ENCODE measurements at regions of chr10 and their contacts with region 1.

Region 1: GRCh38 chr10:110746254-110746826 is 102.2 kb downstream of the RBM20 start:
- DNase-seq: peak in 13 of 14 experiments; percentile 12 to 77 (median 45)
- ATAC-seq: peak; percentile 19
- H3K4me3 ChIP-seq: no peak overlapping the region
- H3K4me3 Mint-ChIP-seq: no peak overlapping the region
- H3K27ac ChIP-seq: no peak overlapping the region
- H3K27ac Mint-ChIP-seq: peak overlapping the region; percentile 68
- H3K4me1 ChIP-seq: peaks cover 39% of the 10 kb centered on the region
- H3K4me1 Mint-ChIP-seq: peaks cover 89% of the 10 kb centered on the region
- H3K27me3 ChIP-seq: no peaks in the 10 kb centered on the region
- H3K27me3 Mint-ChIP-seq: no peaks in the 10 kb centered on the region
- CTCF ChIP-seq: peak; percentile 91

Region 2: DNA sequence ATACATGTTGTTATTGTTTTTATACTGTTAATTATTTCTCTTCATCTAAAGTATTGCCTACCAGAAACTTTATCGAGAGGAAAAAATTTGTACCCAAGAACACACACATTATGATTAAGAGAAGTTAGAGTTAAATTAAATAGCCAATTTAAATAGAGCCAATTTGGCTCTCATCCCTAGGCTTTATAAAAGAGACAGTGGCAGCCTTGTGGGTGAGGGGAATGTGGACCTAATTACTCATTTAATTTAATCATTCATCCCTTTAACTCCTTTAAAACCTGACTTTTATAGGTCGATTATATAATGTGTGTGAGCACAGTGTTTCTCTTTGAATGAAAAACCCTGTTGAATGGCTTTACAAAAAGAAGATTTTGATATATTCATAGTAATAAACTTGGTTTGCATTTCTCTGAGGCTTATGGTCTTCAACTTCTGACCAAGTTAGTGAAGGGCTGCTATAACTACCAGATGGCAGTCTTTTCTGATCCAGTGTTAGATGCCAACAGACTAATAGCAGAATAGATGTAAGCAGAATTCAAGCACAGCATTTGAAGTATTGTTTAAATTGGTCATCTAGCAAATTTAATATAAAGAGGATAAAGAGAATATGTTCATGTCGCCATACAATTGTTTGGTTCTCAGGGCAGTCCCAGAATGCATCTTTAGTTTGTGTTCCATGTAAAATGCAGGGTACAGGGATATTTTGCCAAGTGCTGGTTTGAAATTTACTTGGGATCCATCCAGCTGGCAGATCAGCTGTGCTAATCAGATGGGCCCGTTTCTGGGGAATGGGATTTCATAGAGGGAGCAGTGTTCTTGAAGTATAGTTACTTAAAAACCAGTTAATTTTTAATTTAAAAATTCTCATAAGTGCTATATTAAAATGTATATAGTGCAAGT is 713.3 kb before region 1 on chr10:
- CTCF ChIA-PET with region 1: no interaction called
- POLR2A ChIA-PET with region 1: no interaction called
- intact Hi-C with region 1: no loop called
- DNase-seq: no peak
- ATAC-seq: no peak
- H3K4me3 ChIP-seq: no peak overlapping the region
- H3K4me3 Mint-ChIP-seq: no peak overlapping the region
- H3K27ac ChIP-seq: no peak overlapping the region
- H3K27ac Mint-ChIP-seq: peak overlapping the region; percentile 2
- H3K4me1 ChIP-seq: peaks cover 33% of the 10 kb centered on the region
- H3K4me1 Mint-ChIP-seq: peaks cover 89% of the 10 kb centered on the region
- H3K27me3 ChIP-seq: no peaks in the 10 kb centered on the region
- H3K27me3 Mint-ChIP-seq: no peaks in the 10 kb centered on the region
- CTCF ChIP-seq: no peak

Region 3: GRCh38 chr10:110798340-110798739 is 52.0 kb after region 1 on chr10:
- CTCF ChIA-PET with region 1: interaction called, 3 read pairs
- POLR2A ChIA-PET with region 1: interaction called, 5 read pairs
- intact Hi-C with region 1: loop called (anchors 1 to 2 kb)
- DNase-seq: no peak
- ATAC-seq: no peak
- H3K4me3 ChIP-seq: no peak overlapping the region
- H3K4me3 Mint-ChIP-seq: no peak overlapping the region
- H3K27ac ChIP-seq: no peak overlapping the region
- H3K27ac Mint-ChIP-seq: no peak overlapping the region
- H3K4me1 ChIP-seq: peaks cover 8% of the 10 kb centered on the region
- H3K4me1 Mint-ChIP-seq: peaks cover 18% of the 10 kb centered on the region
- H3K27me3 ChIP-seq: no peaks in the 10 kb centered on the region
- H3K27me3 Mint-ChIP-seq: no peaks in the 10 kb centered on the region
- CTCF ChIP-seq: no peak

Region 4: GRCh38 chr10:110871298-110872084 is 125.2 kb after region 1 on chr10 and contains the start of gene PDCD4:
- CTCF ChIA-PET with region 1: interaction called, 8 read pairs
- POLR2A ChIA-PET with region 1: interaction called, 3 read pairs
- intact Hi-C with region 1: loop called (anchors 1 to 5 kb)
- DNase-seq: peak; percentile 87 to 96 (median 90)
- ATAC-seq: peak; percentile 56
- H3K4me3 ChIP-seq: peak within 1 kb of the TSS; percentile 86
- H3K4me3 Mint-ChIP-seq: peak within 1 kb of the TSS; percentile 99
- H3K27ac ChIP-seq: peak within 1 kb of the TSS; percentile 93 to 99
- H3K27ac Mint-ChIP-seq: peak within 1 kb of the TSS; percentile 96
- H3K4me1 ChIP-seq: peaks cover 54% of the 10 kb centered on the region
- H3K4me1 Mint-ChIP-seq: peaks cover 85% of the 10 kb centered on the region
- H3K27me3 ChIP-seq: no peaks in the 10 kb centered on the region
- H3K27me3 Mint-ChIP-seq: no peaks in the 10 kb centered on the region
- CTCF ChIP-seq: no peak
- total RNA-seq, gene PDCD4: 352 to 358 TPM

Region 5: DNA sequence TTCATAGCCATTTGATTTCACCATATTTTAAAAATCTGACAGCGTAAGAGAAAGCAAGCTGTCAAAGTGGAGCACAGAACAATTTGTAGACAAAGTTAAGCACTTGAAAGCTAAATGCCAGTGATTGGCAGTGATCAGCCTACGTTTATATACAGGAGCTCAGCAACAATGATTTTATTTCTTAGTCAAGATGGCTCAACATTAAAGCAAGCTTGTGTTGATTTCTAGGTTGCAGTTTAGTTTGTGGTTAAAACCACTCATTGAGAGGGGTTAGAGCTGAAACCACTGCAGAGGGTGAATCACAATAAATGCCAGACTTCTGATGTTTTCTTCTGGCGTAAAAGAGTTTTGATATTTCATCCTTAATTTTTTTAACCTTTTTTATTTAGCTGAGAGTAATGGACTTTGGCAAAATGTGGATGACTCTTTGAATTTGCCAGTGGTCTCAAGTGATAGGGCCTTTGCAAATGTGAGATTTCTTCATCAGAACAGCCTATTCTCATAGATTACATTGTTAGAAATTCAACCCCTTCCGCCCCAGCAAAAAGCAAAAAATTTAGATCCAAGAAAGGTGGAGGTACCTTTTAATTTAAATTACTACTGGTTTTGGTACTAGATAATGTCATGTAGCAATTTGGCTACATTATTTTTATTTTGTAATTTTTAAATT is 246.8 kb after region 1 on chr10:
- CTCF ChIA-PET with region 1: no interaction called
- POLR2A ChIA-PET with region 1: no interaction called
- intact Hi-C with region 1: loop called in 1 of 2 experiments (anchors 10 kb)
- DNase-seq: peak in 6 of 14 experiments; percentile 3 to 67 (median 38)
- ATAC-seq: peak; percentile 96
- H3K4me3 ChIP-seq: no peak overlapping the region
- H3K4me3 Mint-ChIP-seq: peak overlapping the region; percentile 55
- H3K27ac ChIP-seq: no peak overlapping the region
- H3K27ac Mint-ChIP-seq: peak overlapping the region; percentile 65
- H3K4me1 ChIP-seq: peaks cover 6% of the 10 kb centered on the region
- H3K4me1 Mint-ChIP-seq: peaks cover 61% of the 10 kb centered on the region
- H3K27me3 ChIP-seq: no peaks in the 10 kb centered on the region
- H3K27me3 Mint-ChIP-seq: no peaks in the 10 kb centered on the region
- CTCF ChIP-seq: no peak

Region 6: DNA sequence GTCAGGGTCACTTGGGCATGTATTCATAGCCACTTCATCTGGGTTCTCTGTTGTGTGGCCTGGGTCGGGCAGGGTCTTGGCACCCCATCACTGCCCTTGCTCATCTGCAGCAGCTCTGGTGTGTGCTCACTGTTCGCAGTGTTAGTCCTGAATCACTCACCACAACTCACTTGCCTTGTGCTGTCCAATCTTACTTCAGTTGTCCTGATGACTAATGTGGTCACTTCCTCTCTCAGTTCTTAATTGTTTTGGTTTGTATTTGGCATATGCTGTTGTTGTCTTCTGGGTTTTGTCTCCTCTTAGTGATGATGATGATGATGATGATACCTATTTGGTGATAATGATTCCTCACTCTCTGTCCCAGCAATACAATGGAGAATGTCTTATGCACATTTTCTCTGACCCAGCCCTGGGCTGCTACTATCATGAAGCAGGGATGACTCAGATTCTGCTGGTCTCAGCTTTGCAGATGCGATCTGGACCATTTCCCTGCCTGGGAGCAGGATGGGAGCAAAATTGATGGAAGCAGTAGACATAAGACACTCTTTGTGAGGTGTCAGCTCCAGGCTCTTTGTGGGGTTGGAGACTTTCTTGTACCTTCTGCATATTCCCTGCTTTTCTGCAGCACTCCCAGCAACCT is 347.5 kb after region 1 on chr10:
- CTCF ChIA-PET with region 1: no interaction called
- POLR2A ChIA-PET with region 1: no interaction called
- intact Hi-C with region 1: loop called in 1 of 2 experiments (anchors 10 kb)
- DNase-seq: no peak
- ATAC-seq: no peak
- H3K4me3 ChIP-seq: no peak overlapping the region
- H3K4me3 Mint-ChIP-seq: no peak overlapping the region
- H3K27ac ChIP-seq: no peak overlapping the region
- H3K27ac Mint-ChIP-seq: no peak overlapping the region
- H3K4me1 ChIP-seq: no peaks in the 10 kb centered on the region
- H3K4me1 Mint-ChIP-seq: no peaks in the 10 kb centered on the region
- H3K27me3 ChIP-seq: peaks cover 0 to 5% of the 10 kb centered on the region in 2 experiments
- H3K27me3 Mint-ChIP-seq: peaks cover 23% of the 10 kb centered on the region
- CTCF ChIP-seq: no peak

Region 7: GRCh38 chr10:111598436-111599059 is 852.2 kb after region 1 on chr10:
- CTCF ChIA-PET with region 1: no interaction called
- POLR2A ChIA-PET with region 1: no interaction called
- intact Hi-C with region 1: loop called (anchors 10 kb)
- DNase-seq: peak in 12 of 14 experiments; percentile 1 to 66 (median 12)
- ATAC-seq: peak; percentile 49
- H3K4me3 ChIP-seq: no peak overlapping the region
- H3K4me3 Mint-ChIP-seq: no peak overlapping the region
- H3K27ac ChIP-seq: no peak overlapping the region
- H3K27ac Mint-ChIP-seq: no peak overlapping the region
- H3K4me1 ChIP-seq: no peaks in the 10 kb centered on the region
- H3K4me1 Mint-ChIP-seq: no peaks in the 10 kb centered on the region
- H3K27me3 ChIP-seq: peaks cover 0 to 9% of the 10 kb centered on the region in 2 experiments
- H3K27me3 Mint-ChIP-seq: peaks cover 1% of the 10 kb centered on the region
- CTCF ChIP-seq: peak; percentile 65

Measured in CD4-positive, alpha-beta T cell (primary cell).